ENCODE measurements at regions of chr11 and their contacts with region 1.

Region 1: GRCh38 chr11:8789864-8790263 is 107.3 kb downstream of the RPL27A start:
- DNase-seq: peak in 1 of 3 donors; percentile 64
- ATAC-seq: peak; percentile 75
- H3K4me3 ChIP-seq: no peak overlapping the region
- H3K4me1 ChIP-seq: peaks cover 58% of the 10 kb centered on the region
- CTCF ChIP-seq: no peak

Region 2: DNA sequence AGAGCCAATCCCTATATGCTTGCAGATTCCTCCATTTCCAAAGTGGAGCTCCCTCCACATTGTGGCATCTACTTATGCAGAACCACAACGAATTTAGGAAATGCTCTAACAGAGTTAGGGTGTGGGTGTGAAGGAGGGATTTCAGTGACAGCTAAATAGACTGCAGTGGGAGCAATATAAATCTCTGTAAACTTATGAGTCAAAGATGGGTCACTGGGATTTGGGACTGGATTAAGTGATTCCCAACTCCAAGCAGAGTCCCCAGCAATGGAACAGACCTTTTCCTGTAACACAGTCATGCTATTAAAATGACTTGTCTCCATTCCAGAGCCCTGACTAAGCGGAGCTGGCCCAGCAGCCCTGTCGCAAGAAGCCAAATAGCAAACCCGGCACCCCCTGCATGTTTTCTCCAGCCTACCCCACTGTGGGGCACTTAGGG is 70.6 kb before region 1 on chr11:
- intact Hi-C with region 1: no loop called
- DNase-seq: peak in 1 of 3 donors; percentile 25
- ATAC-seq: peak; percentile 28
- H3K4me3 ChIP-seq: no peak overlapping the region
- H3K4me1 ChIP-seq: peaks cover 27% of the 10 kb centered on the region
- CTCF ChIP-seq: no peak

Region 3: GRCh38 chr11:8828580-8829361 is 38.9 kb after region 1 on chr11:
- intact Hi-C with region 1: loop called in 1 of 2 experiments (anchors 2 kb)
- DNase-seq: no peak
- ATAC-seq: no peak
- H3K4me3 ChIP-seq: no peak overlapping the region
- H3K4me1 ChIP-seq: no peaks in the 10 kb centered on the region
- CTCF ChIP-seq: no peak

Measured in mucosa of descending colon (tissue), 3 donors.